A549 (cell line): ENCODE measurements at regions of chr14 and their contacts with region 1.

Region 1: DNA sequence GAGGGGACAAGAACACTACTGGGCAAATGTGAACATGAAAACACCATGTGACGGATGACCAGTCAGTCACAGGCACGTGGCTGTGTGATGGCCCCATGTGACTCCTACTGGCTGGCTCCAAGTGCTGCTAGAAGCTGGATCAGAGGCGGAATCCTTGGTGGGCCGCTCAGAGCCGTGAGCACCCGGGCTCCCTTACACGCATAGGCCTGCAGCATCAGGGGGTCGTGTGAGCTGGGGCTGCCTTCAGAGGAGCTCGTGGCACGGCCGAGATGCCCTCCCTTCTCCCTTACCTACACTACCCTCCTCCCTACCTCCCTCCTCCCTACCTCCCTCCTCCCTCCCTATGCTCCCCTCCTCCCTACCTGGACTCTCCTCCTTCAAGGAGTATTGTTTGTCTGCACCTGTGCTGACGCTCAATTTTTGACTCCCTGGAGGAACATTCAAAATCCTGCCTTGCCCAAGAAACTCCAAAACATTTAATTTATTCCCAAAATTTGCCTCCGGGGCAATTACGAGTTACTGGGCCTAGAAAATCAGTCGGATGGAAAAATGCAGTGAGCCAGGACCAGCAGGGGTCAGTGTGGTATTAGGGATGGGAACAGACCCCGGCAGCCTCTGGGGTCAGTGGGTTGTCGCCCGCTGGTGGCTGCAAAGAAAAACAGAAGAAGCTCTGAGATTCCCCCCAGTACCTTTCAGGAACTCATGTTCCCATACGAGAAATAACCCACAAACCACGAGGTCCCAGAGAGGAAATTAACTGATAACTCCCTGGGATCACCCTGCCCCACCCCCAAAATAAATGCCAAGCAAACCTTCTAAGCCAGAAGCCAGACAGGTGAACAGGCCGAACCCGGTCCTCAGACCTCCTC is 61.2 kb downstream of the C14orf132 start:
- DNase-seq: peak; percentile 82 to 87
- ATAC-seq: peak; percentile 17 to 65; a peak in 4 of 6 replicates
- H3K4me3 ChIP-seq: no peak overlapping the region
- H3K27ac ChIP-seq: peak overlapping the region; percentile 86 to 88; a peak in 5 of 6 replicates
- H3K4me1 ChIP-seq: peaks cover 58% of the 10 kb centered on the region
- CTCF ChIP-seq: peak; percentile 100
- EP300 ChIP-seq: no peak
- POLR2A ChIP-seq: no peak
- RAD21 ChIP-seq: peak; percentile 100

Region 2: GRCh38 chr14:95857275-95857674 is 243.1 kb before region 1 on chr14:
- CTCF ChIA-PET with region 1: no interaction called
- POLR2A ChIA-PET with region 1: no interaction called
- DNase-seq: no peak
- ATAC-seq: no peak
- H3K4me3 ChIP-seq: no peak overlapping the region
- H3K27ac ChIP-seq: no peak overlapping the region
- H3K4me1 ChIP-seq: no peaks in the 10 kb centered on the region
- CTCF ChIP-seq: no peak
- EP300 ChIP-seq: no peak
- POLR2A ChIP-seq: no peak
- RAD21 ChIP-seq: no peak

Region 3: GRCh38 chr14:95935228-95935822 is 165.1 kb before region 1 on chr14:
- CTCF ChIA-PET with region 1: no interaction called
- POLR2A ChIA-PET with region 1: no interaction called
- DNase-seq: no peak
- ATAC-seq: no peak
- H3K4me3 ChIP-seq: no peak overlapping the region
- H3K27ac ChIP-seq: no peak overlapping the region
- H3K4me1 ChIP-seq: no peaks in the 10 kb centered on the region
- CTCF ChIP-seq: no peak
- EP300 ChIP-seq: no peak
- POLR2A ChIP-seq: no peak
- RAD21 ChIP-seq: no peak

Region 4: GRCh38 chr14:96001866-96002497 is 98.4 kb before region 1 on chr14:
- CTCF ChIA-PET with region 1: interaction called, 280 read pairs
- POLR2A ChIA-PET with region 1: no interaction called
- DNase-seq: no peak
- ATAC-seq: no peak
- H3K4me3 ChIP-seq: no peak overlapping the region
- H3K27ac ChIP-seq: no peak overlapping the region
- H3K4me1 ChIP-seq: no peaks in the 10 kb centered on the region
- CTCF ChIP-seq: no peak
- EP300 ChIP-seq: no peak
- POLR2A ChIP-seq: no peak
- RAD21 ChIP-seq: no peak

Region 5: GRCh38 chr14:96117100-96117897 is 16.9 kb after region 1 on chr14:
- CTCF ChIA-PET with region 1: interaction called, 24 read pairs
- POLR2A ChIA-PET with region 1: no interaction called
- DNase-seq: no peak
- ATAC-seq: no peak
- H3K4me3 ChIP-seq: no peak overlapping the region
- H3K27ac ChIP-seq: peak overlapping the region in 1 of 2 experiments; percentile 35; a peak in 1 of 6 replicates
- H3K4me1 ChIP-seq: peaks cover 20% of the 10 kb centered on the region
- CTCF ChIP-seq: no peak
- EP300 ChIP-seq: no peak
- POLR2A ChIP-seq: no peak
- RAD21 ChIP-seq: no peak

Region 6: DNA sequence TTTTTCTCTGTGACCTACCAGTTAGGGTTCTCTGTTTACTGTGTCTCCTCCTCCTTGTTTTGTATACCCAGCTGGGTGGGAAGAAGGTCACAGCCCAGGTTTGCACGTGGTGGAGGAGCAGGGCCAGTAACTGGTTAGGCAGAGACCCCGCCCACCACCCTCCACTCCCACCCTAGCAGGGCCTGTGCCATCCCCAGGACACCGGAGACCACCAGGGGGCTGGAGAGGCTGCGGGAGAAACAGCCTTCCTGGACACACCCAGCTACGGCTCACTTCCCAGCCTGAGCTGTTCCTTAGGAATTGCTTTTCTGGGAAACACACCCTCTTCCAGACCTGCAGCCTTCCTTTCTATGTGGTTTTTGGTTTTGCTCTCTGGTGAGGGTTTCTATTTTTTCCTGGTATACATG is 125.4 kb after region 1 on chr14:
- CTCF ChIA-PET with region 1: interaction called, 10 read pairs
- POLR2A ChIA-PET with region 1: no interaction called
- DNase-seq: peak in 1 of 2 experiments; percentile 41
- ATAC-seq: peak; percentile 61 to 84
- H3K4me3 ChIP-seq: no peak overlapping the region
- H3K27ac ChIP-seq: peak overlapping the region in 1 of 2 experiments; percentile 40; a peak in 4 of 6 replicates
- H3K4me1 ChIP-seq: peaks cover 26% of the 10 kb centered on the region
- CTCF ChIP-seq: no peak
- EP300 ChIP-seq: no peak
- POLR2A ChIP-seq: no peak
- RAD21 ChIP-seq: no peak

Region 7: GRCh38 chr14:96260341-96260821 is 160.0 kb after region 1 on chr14:
- CTCF ChIA-PET with region 1: interaction called, 31 read pairs
- POLR2A ChIA-PET with region 1: no interaction called
- DNase-seq: no peak
- ATAC-seq: peak; percentile 47 to 66; a peak in 5 of 6 replicates
- H3K4me3 ChIP-seq: no peak overlapping the region
- H3K27ac ChIP-seq: peak overlapping the region; percentile 62 to 64; a peak in 5 of 6 replicates
- H3K4me1 ChIP-seq: peaks cover 30% of the 10 kb centered on the region
- CTCF ChIP-seq: no peak
- EP300 ChIP-seq: peak; percentile 63 to 71; a peak in 3 of 5 replicates
- POLR2A ChIP-seq: no peak
- RAD21 ChIP-seq: no peak

Region 8: DNA sequence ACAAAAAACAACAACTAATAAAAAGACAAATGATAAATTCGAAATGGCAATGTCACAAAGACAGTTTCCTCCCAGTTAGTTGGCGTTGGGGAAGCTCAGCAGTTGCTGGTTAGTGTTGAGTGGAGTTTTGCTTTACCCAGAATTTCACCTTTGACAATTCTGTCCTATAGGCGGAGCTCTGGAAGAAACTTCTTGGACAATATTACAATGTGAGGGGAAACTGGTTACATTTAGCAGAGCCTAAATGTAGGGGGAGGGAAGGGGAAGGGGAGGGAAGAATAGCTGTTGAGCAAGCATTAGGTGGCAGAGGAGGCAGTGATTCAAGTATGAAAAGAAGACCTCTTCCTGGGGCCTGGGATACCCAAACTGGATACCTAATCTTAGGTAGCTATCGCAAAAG is 207.0 kb after region 1 on chr14:
- CTCF ChIA-PET with region 1: interaction called, 11 read pairs
- POLR2A ChIA-PET with region 1: no interaction called
- DNase-seq: peak; percentile 18 to 39
- ATAC-seq: peak; percentile 59 to 62; a peak in 4 of 6 replicates
- H3K4me3 ChIP-seq: no peak overlapping the region
- H3K27ac ChIP-seq: peak overlapping the region in 1 of 2 experiments; percentile 13; a peak in 1 of 6 replicates
- H3K4me1 ChIP-seq: peaks cover 47% of the 10 kb centered on the region
- CTCF ChIP-seq: peak; percentile 33; the same call in 1 of the 3 replicates
- EP300 ChIP-seq: no peak
- POLR2A ChIP-seq: no peak
- RAD21 ChIP-seq: no peak